Left ventricle myocardium inferior (tissue), 1 donor: ENCODE measurements at regions of chr5 and their contacts with region 1.

Region 1: DNA sequence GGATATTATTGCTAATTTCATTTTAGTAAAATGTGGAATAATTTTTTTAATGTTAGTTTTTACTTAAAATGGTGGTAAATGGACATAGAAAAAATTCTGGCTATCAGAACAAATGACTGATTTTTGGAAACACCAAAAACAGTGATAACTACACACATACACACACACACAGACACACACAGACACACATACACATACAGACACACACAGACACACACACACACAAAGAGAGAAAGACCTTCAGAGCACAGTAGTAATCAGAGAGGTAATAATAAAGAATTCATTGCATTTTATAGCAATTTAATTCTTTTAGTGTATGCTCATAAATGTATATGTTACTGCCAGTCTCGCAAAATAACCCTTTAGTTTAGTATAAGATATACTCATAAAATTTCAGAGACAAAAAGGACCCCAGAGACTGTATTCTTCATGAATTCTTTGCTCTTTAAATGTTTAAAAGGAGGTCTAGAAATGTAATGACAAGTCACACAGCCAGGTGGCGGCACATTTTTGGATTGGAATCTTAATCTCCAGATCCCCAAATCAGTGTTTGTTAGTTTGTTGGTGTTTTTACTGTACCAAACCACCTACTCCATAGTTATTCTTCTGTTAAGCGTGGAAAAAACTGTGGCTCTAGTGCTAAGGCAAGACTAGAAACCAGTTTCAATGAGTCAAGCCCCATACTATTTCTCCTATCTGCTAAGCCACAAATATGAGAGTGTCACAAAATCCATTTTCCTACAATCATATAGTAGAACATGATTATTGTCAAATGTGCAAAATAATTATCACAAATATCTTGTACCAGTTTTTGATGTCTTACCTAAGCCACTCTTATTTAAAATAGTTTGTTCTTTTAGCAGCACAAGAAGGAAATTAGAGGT is 109.9 kb downstream of the EDIL3 start:
- DNase-seq: peak; percentile 15
- H3K4me3 ChIP-seq: no peak overlapping the region
- H3K27ac ChIP-seq: no peak overlapping the region
- H3K4me1 ChIP-seq: peaks cover 8% of the 10 kb centered on the region
- H3K27me3 ChIP-seq: no peaks in the 10 kb centered on the region
- CTCF ChIP-seq: peak; percentile 61

Region 2: DNA sequence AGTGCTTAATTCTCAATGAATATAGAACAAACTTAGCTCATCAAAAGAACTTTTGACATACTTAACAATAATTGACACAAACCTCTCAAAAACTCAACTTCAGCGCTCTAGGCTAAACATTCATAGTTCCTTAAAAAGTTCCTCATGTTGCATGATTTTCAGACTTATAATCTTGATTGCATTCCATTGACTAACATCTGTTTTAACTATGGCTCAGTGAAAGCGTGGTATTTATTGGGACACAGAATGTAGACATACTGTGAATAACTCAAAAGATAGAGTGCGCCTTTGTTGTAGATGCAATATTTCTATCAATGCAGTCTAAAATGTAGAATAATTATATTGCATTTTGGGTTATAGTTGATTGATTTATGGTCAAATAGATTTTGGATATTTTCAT is 327.1 kb before region 1 on chr5:
- intact Hi-C with region 1: no loop called
- DNase-seq: no peak
- H3K4me3 ChIP-seq: no peak overlapping the region
- H3K27ac ChIP-seq: no peak overlapping the region
- H3K4me1 ChIP-seq: no peaks in the 10 kb centered on the region
- H3K27me3 ChIP-seq: no peaks in the 10 kb centered on the region
- CTCF ChIP-seq: no peak

Region 3: DNA sequence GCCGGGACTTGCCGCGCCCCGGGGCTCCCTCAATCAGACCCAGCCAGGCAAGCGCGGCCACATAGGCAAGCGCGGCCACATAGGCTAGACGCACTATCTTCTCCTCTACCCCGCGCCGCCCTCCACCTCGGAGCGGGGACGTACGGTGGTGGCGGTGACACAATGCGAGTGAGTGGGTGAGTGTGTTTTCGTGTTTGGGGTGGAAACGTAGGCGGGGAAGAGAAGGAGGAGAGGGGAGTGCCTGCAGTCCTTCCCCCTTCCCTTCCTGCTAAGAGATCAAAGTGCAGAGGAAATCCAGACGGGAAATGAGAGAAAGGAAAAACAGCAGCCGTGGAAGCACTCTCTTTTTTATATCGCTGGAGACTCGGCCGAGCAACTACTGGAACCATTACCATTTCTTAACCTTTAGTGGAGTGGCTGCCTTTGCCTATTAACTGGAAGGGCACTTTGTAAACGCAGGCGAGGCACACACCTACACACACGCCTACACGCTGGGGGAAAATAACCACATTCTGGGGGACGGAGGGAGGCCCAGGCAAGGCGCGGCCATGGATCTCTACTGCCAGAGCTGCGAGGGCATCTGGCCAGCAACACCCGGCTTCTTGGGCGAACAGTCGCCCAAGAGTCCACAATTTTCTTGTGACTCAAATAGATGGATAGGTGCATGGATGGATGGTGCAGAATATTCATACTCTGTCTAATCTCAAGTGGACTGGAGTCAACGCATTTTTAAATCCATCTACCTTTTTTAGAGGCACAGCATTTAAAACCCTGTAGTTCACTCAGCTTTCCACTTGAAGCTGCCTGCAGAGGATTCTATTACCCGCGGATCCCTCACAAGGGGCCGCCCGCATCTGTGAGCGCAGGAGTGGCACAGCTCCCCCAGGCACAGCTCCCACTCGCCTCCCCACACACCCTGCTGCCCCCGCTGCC is 107.8 kb after region 1 on chr5:
- intact Hi-C with region 1: loop called (anchors 10 kb)
- DNase-seq: peak; percentile 18
- H3K4me3 ChIP-seq: peak overlapping the region; percentile 67
- H3K27ac ChIP-seq: peak overlapping the region; percentile 63
- H3K4me1 ChIP-seq: peaks cover 34% of the 10 kb centered on the region
- H3K27me3 ChIP-seq: peaks cover 68% of the 10 kb centered on the region
- CTCF ChIP-seq: no peak

Region 4: DNA sequence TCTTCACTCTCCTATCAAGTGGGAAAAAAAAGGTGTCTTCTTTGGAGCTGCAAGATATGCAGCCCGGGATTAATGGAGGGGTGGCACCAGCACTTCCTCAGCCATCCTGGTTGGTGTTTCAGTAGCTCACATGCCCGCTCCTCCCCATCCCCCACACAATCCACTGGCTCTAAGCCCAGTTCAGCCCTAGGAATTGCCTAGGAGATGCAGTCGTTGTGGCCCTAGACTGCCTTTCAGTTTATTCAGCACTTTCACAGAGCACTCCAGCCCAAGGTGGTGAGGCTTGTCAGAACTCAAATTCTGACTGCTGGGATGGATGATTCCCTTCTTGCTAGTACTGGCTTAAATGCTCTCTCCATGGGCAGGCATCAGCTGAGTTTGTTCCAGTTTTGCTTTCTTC is 144.9 kb after region 1 on chr5:
- intact Hi-C with region 1: no loop called
- DNase-seq: no peak
- H3K4me3 ChIP-seq: no peak overlapping the region
- H3K27ac ChIP-seq: no peak overlapping the region
- H3K4me1 ChIP-seq: no peaks in the 10 kb centered on the region
- H3K27me3 ChIP-seq: no peaks in the 10 kb centered on the region
- CTCF ChIP-seq: no peak